Activated T-helper 1 cell treated with anti-CD3 and anti-CD28 coated beads, Interleukin-12 subunit alpha, Interleukin-12 subunit beta, Interleukin-2, Interleukin-4 antibody, amounts not matched to agents 30 ng/mL and 10 ng/mL and 1 ng/mL, durations not matched to agents 14 hours and 24 hours and 36 hours (primary cell): ENCODE measurements at regions of chr6 and their contacts with region 1.

Region 1: DNA sequence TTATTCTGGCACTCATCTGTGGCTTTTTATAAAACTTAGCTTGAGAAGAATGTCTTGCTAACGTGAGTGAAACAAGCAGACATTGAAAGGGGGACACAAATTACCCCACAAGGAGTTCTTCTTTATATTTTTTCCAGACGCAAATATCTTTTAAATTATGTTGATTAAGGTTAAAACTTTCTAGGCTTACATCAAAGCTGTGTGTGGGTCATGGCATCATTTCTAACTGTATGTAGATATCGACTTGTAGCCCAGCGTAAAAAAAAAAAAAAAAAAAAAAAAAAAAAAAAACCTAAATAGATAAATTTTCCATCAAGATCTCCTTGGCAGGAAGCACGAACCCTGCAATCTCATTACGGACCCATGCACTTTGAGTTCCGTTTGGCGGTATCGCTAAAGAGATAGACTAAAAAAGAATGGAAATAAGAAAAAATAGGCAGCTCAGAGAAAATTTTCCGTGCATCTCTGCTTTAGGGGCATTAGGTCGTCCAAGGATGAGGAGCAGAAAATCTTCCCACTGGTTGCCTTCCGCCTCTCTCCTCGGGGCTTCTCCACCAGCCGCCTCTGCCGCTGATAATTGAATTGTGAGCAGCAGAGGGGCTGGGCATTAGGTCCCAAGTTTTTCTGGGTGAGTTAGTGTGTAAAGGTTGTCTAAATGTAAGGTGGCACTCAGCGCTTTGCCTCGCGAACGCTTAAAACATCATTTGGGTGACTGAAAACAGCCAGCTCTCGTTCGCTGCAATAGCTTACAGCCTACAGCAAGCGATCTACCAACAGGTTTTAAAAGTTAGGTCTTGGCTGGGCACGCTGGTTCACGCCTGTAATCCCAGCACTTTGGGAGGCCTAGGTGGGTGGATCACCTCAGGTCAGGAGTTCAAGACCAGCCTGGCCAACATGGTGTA is 194.0 kb downstream of the TRIM27 start:
- DNase-seq: no peak
- H3K4me3 Mint-ChIP-seq: peak overlapping the region; percentile 86
- H3K27ac Mint-ChIP-seq: peak overlapping the region; percentile 76
- H3K4me1 Mint-ChIP-seq: peaks cover 22% of the 10 kb centered on the region
- H3K27me3 Mint-ChIP-seq: peaks cover 73% of the 10 kb centered on the region

Region 2: DNA sequence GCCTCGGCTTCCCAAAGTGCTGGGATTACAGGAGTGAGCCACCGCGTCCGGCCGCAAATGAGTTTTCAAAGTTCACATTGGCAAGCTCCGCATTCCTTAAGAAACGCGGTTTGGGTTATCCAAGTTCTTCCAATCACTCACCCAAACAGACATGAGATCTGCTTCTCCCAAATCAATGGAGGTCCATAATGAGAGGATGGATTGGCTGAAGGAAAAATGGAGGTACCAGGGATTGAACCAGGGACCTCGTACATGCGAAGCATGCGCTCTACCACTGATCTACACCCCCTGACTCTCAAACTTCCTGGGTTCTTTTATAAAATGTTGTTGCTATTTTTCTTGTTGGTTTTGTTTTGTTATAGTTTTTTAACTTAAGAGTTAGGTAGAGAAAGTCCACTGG is 34.0 kb before region 1 on chr6:
- intact Hi-C with region 1: loop called (anchors 5 kb)
- DNase-seq: no peak
- H3K4me3 Mint-ChIP-seq: no peak overlapping the region
- H3K27ac Mint-ChIP-seq: peak overlapping the region; percentile 9
- H3K4me1 Mint-ChIP-seq: no peaks in the 10 kb centered on the region
- H3K27me3 Mint-ChIP-seq: peaks cover 58% of the 10 kb centered on the region

Region 3: GRCh38 chr6:28710466-28711191 is 19.1 kb before region 1 on chr6:
- intact Hi-C with region 1: loop called (anchors 2 kb)
- DNase-seq: no peak
- H3K4me3 Mint-ChIP-seq: no peak overlapping the region
- H3K27ac Mint-ChIP-seq: no peak overlapping the region
- H3K4me1 Mint-ChIP-seq: peaks cover 15% of the 10 kb centered on the region
- H3K27me3 Mint-ChIP-seq: peaks cover 31% of the 10 kb centered on the region

Region 4: DNA sequence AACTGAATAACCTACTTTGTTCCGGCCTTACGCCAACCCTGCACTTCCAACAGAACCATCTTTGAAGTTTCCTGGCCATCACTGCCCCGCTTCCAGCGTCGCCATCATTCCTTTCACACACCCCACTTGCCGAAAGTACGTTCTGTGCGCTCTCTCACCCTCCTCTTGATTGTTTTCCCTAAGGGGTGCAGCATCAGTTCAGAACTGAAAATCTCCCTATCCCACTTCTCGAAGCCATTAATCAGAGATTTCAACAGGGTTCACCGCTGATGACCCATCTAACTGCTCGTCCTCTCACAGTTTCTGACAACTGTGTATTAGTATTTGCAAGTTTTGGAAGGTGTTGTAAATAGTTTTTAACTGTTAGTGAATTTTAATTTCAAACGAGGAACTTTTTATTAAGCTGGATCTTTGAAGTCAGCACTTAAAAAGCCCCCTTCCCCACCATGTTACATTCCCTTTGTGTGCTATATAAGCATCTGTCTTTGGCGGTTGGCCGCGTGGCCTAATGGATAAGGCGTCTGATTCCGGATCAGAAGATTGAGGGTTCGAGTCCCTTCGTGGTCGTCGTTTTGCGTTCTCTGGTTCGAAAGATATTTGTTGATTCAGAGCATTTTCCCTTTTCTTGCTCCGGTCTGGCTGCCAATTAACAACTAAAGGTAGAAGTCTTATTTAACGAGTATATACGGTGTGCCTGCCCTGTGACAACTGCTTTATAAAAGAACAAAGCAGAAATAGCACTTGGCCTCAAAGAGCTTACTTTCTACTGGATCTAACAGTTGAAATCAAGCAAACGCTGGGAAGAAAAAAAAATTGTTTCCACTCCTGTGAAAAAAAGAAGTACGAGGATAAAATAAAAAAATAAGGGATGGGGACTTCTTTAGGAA is 151.4 kb after region 1 on chr6:
- intact Hi-C with region 1: no loop called
- DNase-seq: peak; percentile 30
- H3K4me3 Mint-ChIP-seq: peak overlapping the region; percentile 76
- H3K27ac Mint-ChIP-seq: peak overlapping the region; percentile 81
- H3K4me1 Mint-ChIP-seq: peaks cover 34% of the 10 kb centered on the region
- H3K27me3 Mint-ChIP-seq: peaks cover 36% of the 10 kb centered on the region